CD4-positive, alpha-beta T cell (primary cell): ENCODE measurements at regions of chr19 and their contacts with region 1.

Region 1: DNA sequence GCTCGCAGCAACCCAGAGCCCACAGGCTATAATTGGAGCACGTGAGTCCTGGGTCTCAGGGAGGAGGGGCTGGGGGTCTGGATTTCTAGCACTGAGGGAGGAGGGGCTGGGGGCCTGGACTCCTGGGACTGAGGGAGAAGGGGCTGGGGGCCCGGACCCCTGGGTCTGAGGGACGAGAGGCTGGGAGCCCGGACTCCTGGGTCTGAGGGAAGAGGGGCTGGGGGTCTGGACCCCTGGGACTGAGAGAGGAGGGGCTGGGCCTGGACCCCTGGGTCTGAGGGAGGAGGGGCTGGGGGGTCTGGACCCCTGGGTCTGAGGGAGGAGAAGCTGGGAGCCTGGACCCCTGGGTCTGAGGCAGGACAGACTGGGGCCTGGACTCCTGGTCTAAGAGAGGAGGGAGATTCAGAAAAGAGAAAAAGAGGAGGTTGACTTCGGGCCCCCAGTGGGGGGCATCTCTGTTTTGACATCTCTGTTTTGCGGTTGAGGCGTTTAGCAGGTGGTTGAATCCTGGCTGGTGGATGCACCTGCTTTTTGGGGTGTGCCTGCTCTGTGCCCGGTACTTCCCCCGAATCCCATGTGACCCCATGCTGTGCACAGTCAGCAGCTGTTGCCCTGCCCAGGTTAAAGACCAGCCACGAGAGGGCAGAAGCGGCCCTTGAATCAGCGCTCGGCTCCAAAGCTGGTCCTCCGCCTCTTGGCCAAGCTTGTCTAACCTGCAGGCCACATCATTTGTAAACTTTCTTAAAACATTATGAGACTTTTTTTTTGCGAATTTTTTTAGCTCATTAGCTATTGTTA is 10.5 kb downstream of the PVR start:
- DNase-seq: peak; percentile 54 to 87 (median 66)
- ATAC-seq: peak; percentile 96
- H3K4me3 ChIP-seq: no peak overlapping the region
- H3K4me3 Mint-ChIP-seq: no peak overlapping the region
- H3K27ac ChIP-seq: no peak overlapping the region
- H3K27ac Mint-ChIP-seq: no peak overlapping the region
- H3K4me1 ChIP-seq: peaks cover 12% of the 10 kb centered on the region
- H3K4me1 Mint-ChIP-seq: peaks cover 7% of the 10 kb centered on the region
- H3K27me3 ChIP-seq: no peaks in the 10 kb centered on the region
- H3K27me3 Mint-ChIP-seq: no peaks in the 10 kb centered on the region
- CTCF ChIP-seq: peak; percentile 43

Region 2: DNA sequence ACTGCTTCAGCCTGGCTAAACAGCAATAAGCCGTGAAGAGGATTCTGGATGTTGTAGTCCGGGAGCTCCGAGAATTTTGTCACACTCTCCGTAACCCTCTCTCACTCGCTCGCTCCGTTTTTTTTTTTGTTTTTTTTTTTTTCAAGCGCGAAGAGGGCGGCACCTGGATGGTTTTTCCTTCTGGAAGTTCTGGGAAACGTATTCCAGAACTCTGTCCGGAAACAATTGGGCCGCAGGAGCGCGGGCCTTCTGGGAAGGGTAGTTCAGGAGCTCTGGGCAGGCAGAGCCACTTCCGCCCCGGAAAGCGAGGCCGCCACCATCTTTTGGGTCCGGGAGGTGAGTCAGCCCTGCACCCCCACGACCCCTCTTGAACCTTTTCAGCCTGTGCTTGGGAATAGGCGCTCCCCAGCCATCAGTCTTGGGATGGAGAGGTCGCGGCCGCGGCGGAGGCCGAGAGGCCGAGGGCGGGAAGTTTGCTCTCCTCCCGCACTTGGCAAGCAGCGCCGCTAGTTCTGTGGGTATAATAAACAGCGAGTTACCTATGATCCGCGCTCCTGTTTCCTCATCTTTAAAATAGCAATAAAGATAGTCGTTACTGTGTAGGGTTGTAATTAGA is 441.8 kb before region 1 on chr19 and contains the start of gene ZNF227:
- CTCF ChIA-PET with region 1: no interaction called
- POLR2A ChIA-PET with region 1: no interaction called
- intact Hi-C with region 1: loop called in 1 of 2 experiments (anchors 5 kb)
- DNase-seq: peak; percentile 59 to 88 (median 76)
- ATAC-seq: peak; percentile 96
- H3K4me3 ChIP-seq: peak within 1 kb of the TSS; percentile 65
- H3K4me3 Mint-ChIP-seq: peak within 1 kb of the TSS; percentile 96
- H3K27ac ChIP-seq: peak within 1 kb of the TSS; percentile 70 to 73
- H3K27ac Mint-ChIP-seq: peak within 1 kb of the TSS; percentile 90
- H3K4me1 ChIP-seq: peaks cover 9% of the 10 kb centered on the region
- H3K4me1 Mint-ChIP-seq: peaks cover 48% of the 10 kb centered on the region
- H3K27me3 ChIP-seq: no peaks in the 10 kb centered on the region
- H3K27me3 Mint-ChIP-seq: no peaks in the 10 kb centered on the region
- CTCF ChIP-seq: no peak
- total RNA-seq, gene ZNF227: 16.2 to 17.2 TPM

Region 3: GRCh38 chr19:44570984-44571684 is 83.0 kb before region 1 on chr19:
- CTCF ChIA-PET with region 1: interaction called, 3 read pairs
- POLR2A ChIA-PET with region 1: no interaction called
- intact Hi-C with region 1: loop called (anchors 1 to 2 kb)
- DNase-seq: peak in 11 of 14 experiments; percentile 2 to 71 (median 23)
- ATAC-seq: no peak
- H3K4me3 ChIP-seq: no peak overlapping the region
- H3K4me3 Mint-ChIP-seq: no peak overlapping the region
- H3K27ac ChIP-seq: no peak overlapping the region
- H3K27ac Mint-ChIP-seq: no peak overlapping the region
- H3K4me1 ChIP-seq: no peaks in the 10 kb centered on the region
- H3K4me1 Mint-ChIP-seq: no peaks in the 10 kb centered on the region
- H3K27me3 ChIP-seq: no peaks in the 10 kb centered on the region
- H3K27me3 Mint-ChIP-seq: peaks cover 12% of the 10 kb centered on the region
- CTCF ChIP-seq: peak; percentile 57

Region 4: DNA sequence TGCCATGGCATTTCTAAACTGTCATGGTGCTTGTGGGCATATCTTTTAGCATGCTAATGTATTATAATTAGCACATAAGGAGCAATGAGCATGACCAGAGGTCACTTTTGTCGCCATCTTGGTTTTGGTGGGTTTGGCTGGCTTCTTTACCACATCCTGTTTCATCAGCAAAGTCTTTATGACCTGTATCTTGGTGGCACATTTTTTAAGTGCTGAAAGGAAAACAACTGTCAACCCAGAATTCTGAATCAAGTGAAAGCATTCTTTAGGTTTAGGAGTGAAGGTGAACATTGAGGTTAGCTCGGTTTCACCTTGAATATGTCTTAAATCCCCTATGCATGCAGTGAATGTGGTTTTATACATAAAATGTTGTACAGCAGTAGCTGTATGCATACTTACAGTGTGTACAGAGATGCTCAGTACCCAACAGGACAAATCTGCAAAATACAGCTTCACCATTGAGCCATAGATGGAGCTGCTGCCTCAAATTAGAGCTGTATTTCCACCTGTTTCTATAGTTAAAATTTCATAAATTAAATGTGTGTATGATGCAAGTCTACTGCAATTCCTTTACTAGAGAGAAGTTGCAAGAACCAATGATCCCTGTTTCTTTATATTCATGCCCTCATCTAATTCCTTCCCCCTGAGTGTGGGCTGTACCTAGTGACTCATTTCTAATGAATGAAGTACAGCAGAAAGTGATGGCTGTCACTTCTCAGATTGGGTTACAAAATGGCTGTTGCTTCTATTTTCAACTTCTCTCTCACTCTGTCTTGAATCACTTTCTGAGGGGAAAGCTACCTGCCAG is 66.0 kb before region 1 on chr19:
- CTCF ChIA-PET with region 1: no interaction called
- POLR2A ChIA-PET with region 1: no interaction called
- intact Hi-C with region 1: loop called in 1 of 2 experiments (anchors 5 kb)
- DNase-seq: peak in 1 of 14 experiments; percentile 5
- ATAC-seq: no peak
- H3K4me3 ChIP-seq: no peak overlapping the region
- H3K4me3 Mint-ChIP-seq: no peak overlapping the region
- H3K27ac ChIP-seq: no peak overlapping the region
- H3K27ac Mint-ChIP-seq: no peak overlapping the region
- H3K4me1 ChIP-seq: no peaks in the 10 kb centered on the region
- H3K4me1 Mint-ChIP-seq: no peaks in the 10 kb centered on the region
- H3K27me3 ChIP-seq: peaks cover 5 to 9% of the 10 kb centered on the region in 2 experiments
- H3K27me3 Mint-ChIP-seq: peaks cover 26% of the 10 kb centered on the region
- CTCF ChIP-seq: no peak

Region 5: DNA sequence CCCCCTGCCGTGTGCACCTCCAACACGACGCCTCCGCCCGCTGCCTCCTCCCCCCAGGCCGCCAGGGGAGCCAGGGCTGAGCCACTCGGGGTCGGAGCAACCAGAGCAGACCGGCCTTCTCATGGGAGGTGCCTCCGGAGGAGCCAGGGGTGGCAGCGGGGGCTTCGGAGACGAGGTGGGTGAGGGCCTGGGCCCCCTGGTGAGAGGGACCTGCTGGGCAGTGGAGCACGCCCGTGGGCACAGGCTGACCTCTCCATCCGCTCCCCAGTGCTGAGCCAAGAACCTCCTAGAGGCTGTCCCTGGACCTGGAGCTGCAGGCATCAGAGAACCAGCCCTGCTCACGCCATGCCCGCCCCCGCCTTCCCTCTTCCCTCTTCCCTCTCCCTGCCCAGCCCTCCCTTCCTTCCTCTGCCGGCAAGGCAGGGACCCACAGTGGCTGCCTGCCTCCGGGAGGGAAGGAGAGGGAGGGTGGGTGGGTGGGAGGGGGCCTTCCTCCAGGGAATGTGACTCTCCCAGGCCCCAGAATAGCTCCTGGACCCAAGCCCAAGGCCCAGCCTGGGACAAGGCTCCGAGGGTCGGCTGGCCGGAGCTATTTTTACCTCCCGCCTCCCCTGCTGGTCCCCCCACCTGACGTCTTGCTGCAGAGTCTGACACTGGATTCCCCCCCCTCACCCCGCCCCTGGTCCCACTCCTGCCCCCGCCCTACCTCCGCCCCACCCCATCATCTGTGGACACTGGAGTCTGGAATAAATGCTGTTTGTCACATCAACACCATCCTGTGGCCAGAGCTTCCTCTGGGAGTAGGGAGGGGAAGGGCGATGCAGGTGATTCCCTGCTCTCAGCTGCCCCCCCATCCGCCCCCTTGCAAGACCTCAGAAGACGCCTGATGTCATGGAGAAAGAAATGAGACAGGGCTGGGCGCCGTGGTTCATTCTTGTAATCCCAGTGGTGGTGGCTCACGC is 166.8 kb after region 1 on chr19:
- CTCF ChIA-PET with region 1: no interaction called
- POLR2A ChIA-PET with region 1: no interaction called
- intact Hi-C with region 1: no loop called
- DNase-seq: no peak
- ATAC-seq: no peak
- H3K4me3 ChIP-seq: no peak overlapping the region
- H3K4me3 Mint-ChIP-seq: no peak overlapping the region
- H3K27ac ChIP-seq: no peak overlapping the region
- H3K27ac Mint-ChIP-seq: no peak overlapping the region
- H3K4me1 ChIP-seq: no peaks in the 10 kb centered on the region
- H3K4me1 Mint-ChIP-seq: no peaks in the 10 kb centered on the region
- H3K27me3 ChIP-seq: no peaks in the 10 kb centered on the region
- H3K27me3 Mint-ChIP-seq: peaks cover 9% of the 10 kb centered on the region
- CTCF ChIP-seq: no peak